Ovary (tissue), 10 donors: ENCODE measurements at regions of chr9 and their contacts with region 1.

Region 1: GRCh38 chr9:94511134-94511903 is 43.6 kb upstream of the PCAT7 start:
- DNase-seq: no peak
- H3K4me3 ChIP-seq: no peak overlapping the region
- H3K27ac ChIP-seq: no peak overlapping the region
- H3K4me1 ChIP-seq: no peaks in the 10 kb centered on the region
- H3K27me3 ChIP-seq: no peaks in the 10 kb centered on the region
- CTCF ChIP-seq: no peak
- EP300 ChIP-seq: no peak
- POLR2A ChIP-seq: no peak

Region 2: GRCh38 chr9:93860694-93861658 is 650.3 kb before region 1 on chr9:
- intact Hi-C with region 1: loop called in 1 of 4 experiments (anchors 10 kb)
- DNase-seq: no peak
- H3K4me3 ChIP-seq: no peak overlapping the region
- H3K27ac ChIP-seq: no peak overlapping the region
- H3K4me1 ChIP-seq: no peaks in the 10 kb centered on the region
- H3K27me3 ChIP-seq: no peaks in the 10 kb centered on the region
- CTCF ChIP-seq: no peak
- EP300 ChIP-seq: no peak
- POLR2A ChIP-seq: no peak

Region 3: DNA sequence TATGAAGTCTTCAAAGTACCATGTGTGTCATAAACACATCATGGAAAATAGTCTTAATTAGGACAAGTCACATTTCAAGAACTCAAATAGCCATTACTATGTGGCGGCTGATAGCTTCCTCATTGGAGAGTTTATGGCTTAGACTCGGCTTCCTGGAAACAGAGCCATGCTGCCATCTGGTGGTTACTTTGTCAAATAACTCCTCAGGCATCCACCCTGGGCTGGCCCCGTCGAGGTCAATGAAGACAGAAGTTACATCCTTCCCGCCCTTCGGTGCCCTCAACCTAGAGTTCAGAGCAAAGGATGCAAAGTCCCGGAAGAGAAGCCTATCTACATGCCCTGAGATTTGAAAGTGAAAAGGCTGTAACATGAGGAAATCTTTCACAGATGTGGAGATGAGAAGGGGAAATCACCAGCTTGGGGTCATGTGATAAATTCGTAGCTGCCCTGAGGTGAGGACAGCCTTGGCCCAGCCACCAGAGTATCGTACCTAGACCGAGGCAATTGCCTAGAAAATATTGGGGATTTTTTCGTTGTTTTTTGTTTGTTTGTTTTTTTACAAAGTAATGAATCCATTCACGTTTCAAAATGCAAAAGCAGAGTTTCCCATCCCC is 297.7 kb before region 1 on chr9:
- intact Hi-C with region 1: no loop called
- DNase-seq: peak; percentile 54 to 76 (median 64)
- H3K4me3 ChIP-seq: no peak overlapping the region
- H3K27ac ChIP-seq: no peak overlapping the region
- H3K4me1 ChIP-seq: no peaks in the 10 kb centered on the region
- H3K27me3 ChIP-seq: no peaks in the 10 kb centered on the region
- CTCF ChIP-seq: peak; percentile 66 to 86 (median 83)
- EP300 ChIP-seq: no peak
- POLR2A ChIP-seq: no peak

Region 4: GRCh38 chr9:94584555-94584954 is 73.2 kb after region 1 on chr9:
- intact Hi-C with region 1: loop called in 1 of 4 experiments (anchors 2 kb)
- DNase-seq: no peak
- H3K4me3 ChIP-seq: no peak overlapping the region
- H3K27ac ChIP-seq: no peak overlapping the region
- H3K4me1 ChIP-seq: no peaks in the 10 kb centered on the region
- H3K27me3 ChIP-seq: no peaks in the 10 kb centered on the region
- CTCF ChIP-seq: no peak
- EP300 ChIP-seq: no peak
- POLR2A ChIP-seq: no peak